A549 (cell line): ENCODE measurements at regions of chr20 and their contacts with region 1.

Region 1: GRCh38 chr20:4091490-4092479 is 76.4 kb upstream of the RNF24 start:
- DNase-seq: peak; percentile 69 to 89
- ATAC-seq: peak; percentile 79 to 87
- H3K4me3 ChIP-seq: no peak overlapping the region
- H3K27ac ChIP-seq: peak overlapping the region; percentile 60 to 67
- H3K4me1 ChIP-seq: peaks cover 12% of the 10 kb centered on the region
- CTCF ChIP-seq: peak; percentile 70
- EP300 ChIP-seq: no peak
- POLR2A ChIP-seq: no peak
- RAD21 ChIP-seq: peak; percentile 65 to 76

Region 2: DNA sequence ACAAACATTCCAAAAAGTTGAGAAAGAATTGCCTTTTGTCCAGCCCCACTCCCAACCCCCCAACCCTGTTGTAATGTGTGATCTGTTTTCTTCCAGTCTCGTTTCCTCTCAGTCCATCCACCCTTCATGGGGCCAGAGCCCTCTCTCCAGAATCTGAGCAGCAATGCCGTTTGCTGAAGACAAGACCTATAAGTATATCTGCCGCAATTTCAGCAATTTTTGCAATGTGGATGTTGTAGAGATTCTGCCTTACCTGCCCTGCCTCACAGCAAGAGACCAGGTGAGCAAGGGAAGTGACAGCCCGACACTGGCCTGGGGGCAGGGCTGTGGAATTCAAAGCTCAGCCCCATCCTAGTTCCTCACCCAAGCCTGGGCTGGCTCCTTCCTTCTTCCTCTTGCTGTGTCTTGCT is 237.3 kb before region 1 on chr20:
- CTCF ChIA-PET with region 1: no interaction called
- POLR2A ChIA-PET with region 1: no interaction called
- DNase-seq: peak in 1 of 2 experiments; percentile 39
- ATAC-seq: peak; percentile 68 to 80; a peak in 5 of 6 replicates
- H3K4me3 ChIP-seq: no peak overlapping the region
- H3K27ac ChIP-seq: peak overlapping the region in 1 of 2 experiments; percentile 14; a peak in 1 of 6 replicates
- H3K4me1 ChIP-seq: 0 out of 3 replicates have a peak, but pooled peaks cover 5% of the 10 kb centered on the region
- CTCF ChIP-seq: no peak
- EP300 ChIP-seq: no peak
- POLR2A ChIP-seq: no peak
- RAD21 ChIP-seq: no peak

Region 3: DNA sequence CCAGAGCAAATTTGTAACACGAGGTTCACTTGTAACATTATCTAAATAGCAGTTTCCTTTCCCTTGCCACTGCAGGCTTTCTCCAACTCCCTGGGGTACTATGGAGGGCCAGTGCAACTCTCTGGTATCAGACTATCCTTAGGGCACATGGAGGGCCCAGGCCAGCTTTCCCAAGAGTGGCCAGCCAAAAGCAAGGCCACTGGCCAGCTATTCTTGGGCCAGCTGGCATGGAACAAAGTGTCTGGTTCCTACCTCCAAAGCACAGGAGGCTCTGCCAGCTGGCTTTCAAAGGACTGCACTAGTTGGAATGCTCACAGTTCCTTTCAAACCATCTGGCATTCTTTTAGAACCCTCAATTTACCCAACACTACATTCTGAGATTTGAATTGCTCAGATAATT is 85.1 kb before region 1 on chr20:
- CTCF ChIA-PET with region 1: interaction called, 167 read pairs
- POLR2A ChIA-PET with region 1: no interaction called
- DNase-seq: no peak
- ATAC-seq: no peak; a peak in 2 of 6 replicates
- H3K4me3 ChIP-seq: no peak overlapping the region
- H3K27ac ChIP-seq: no peak overlapping the region
- H3K4me1 ChIP-seq: peaks cover 3% of the 10 kb centered on the region; the same call in 1 of the 3 replicates
- CTCF ChIP-seq: no peak
- EP300 ChIP-seq: no peak
- POLR2A ChIP-seq: no peak
- RAD21 ChIP-seq: no peak

Region 4: DNA sequence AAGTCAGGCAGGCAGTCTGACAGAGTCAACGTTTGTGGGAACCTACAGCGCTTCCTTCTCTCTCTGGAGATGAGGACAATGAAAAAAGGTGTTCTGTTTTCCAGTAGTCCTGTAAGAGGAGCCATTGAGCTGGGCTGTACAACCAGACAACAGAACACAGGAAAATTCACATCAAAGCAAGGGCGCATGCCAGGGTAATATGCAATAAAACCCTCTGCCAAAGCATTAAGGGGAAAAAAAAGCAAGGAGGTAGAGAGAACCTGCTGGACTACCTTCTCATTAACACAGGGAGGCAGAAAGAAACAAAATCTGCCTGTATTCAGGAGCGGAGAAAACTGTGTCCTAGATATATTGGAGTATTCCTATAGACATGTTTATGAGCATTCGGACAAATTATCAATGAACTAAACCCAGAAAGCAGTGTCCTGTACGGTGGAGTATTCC is 77.7 kb before region 1 on chr20:
- CTCF ChIA-PET with region 1: interaction called, 167 read pairs
- POLR2A ChIA-PET with region 1: no interaction called
- DNase-seq: peak; percentile 73 to 87
- ATAC-seq: peak; percentile 74 to 84
- H3K4me3 ChIP-seq: peak overlapping the region; percentile 95
- H3K27ac ChIP-seq: peak overlapping the region; percentile 34 to 82; a peak in 4 of 6 replicates
- H3K4me1 ChIP-seq: peaks cover 51% of the 10 kb centered on the region
- CTCF ChIP-seq: peak; percentile 91
- EP300 ChIP-seq: no peak
- POLR2A ChIP-seq: no peak
- RAD21 ChIP-seq: peak; percentile 95 to 96

Region 5: GRCh38 chr20:4076671-4077070 is 15.1 kb before region 1 on chr20:
- CTCF ChIA-PET with region 1: interaction called, 146 read pairs
- POLR2A ChIA-PET with region 1: no interaction called
- DNase-seq: no peak
- ATAC-seq: peak; percentile 10 to 16; a peak in 1 of 6 replicates
- H3K4me3 ChIP-seq: no peak overlapping the region
- H3K27ac ChIP-seq: no peak overlapping the region
- H3K4me1 ChIP-seq: peaks cover 5% of the 10 kb centered on the region
- CTCF ChIP-seq: no peak
- EP300 ChIP-seq: no peak
- POLR2A ChIP-seq: no peak
- RAD21 ChIP-seq: no peak

Region 6: GRCh38 chr20:4102381-4102780 is 10.6 kb after region 1 on chr20:
- CTCF ChIA-PET with region 1: interaction called, 39 read pairs
- POLR2A ChIA-PET with region 1: no interaction called
- DNase-seq: no peak
- ATAC-seq: peak; percentile 48 to 65; a peak in 4 of 6 replicates
- H3K4me3 ChIP-seq: no peak overlapping the region
- H3K27ac ChIP-seq: peak overlapping the region; percentile 22 to 65; a peak in 4 of 6 replicates
- H3K4me1 ChIP-seq: peaks cover 16% of the 10 kb centered on the region; the same call in 2 of the 3 replicates
- CTCF ChIP-seq: no peak
- EP300 ChIP-seq: no peak
- POLR2A ChIP-seq: no peak
- RAD21 ChIP-seq: no peak

Region 7: GRCh38 chr20:4119854-4120209 is 28.0 kb after region 1 on chr20:
- CTCF ChIA-PET with region 1: interaction called, 11 read pairs
- POLR2A ChIA-PET with region 1: no interaction called
- DNase-seq: no peak
- ATAC-seq: peak; percentile 74 to 77
- H3K4me3 ChIP-seq: peak overlapping the region; percentile 8; the same call in 1 of the 3 replicates
- H3K27ac ChIP-seq: peak overlapping the region; percentile 86 to 89
- H3K4me1 ChIP-seq: peaks cover 68% of the 10 kb centered on the region
- CTCF ChIP-seq: no peak
- EP300 ChIP-seq: no peak; a peak in 1 of 5 replicates
- POLR2A ChIP-seq: no peak
- RAD21 ChIP-seq: no peak; a peak in 1 of 5 replicates

Region 8: DNA sequence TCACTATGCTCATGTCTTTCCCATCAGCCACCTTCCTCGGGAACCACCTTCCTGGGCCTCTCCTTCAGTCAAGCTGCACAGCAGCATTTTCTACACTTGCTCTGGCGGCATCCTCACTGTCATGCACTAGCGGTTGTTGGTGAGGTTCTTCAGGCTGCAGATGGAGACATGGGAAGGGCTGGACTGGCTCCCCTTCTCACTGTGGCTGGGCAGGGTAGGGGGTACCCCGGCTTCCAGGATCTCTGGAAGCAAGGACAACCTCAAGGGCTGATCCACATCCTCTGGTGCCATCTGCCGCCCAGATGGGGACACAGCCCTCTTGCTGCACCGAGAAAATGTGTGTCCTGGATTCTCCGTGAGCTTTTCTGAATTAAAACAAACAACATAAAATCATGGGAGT is 103.7 kb after region 1 on chr20:
- CTCF ChIA-PET with region 1: interaction called, 11 read pairs
- POLR2A ChIA-PET with region 1: no interaction called
- DNase-seq: peak; percentile 52 to 61
- ATAC-seq: peak; percentile 14 to 24; a peak in 3 of 6 replicates
- H3K4me3 ChIP-seq: no peak overlapping the region
- H3K27ac ChIP-seq: peak overlapping the region; percentile 48 to 88
- H3K4me1 ChIP-seq: peaks cover 55% of the 10 kb centered on the region
- CTCF ChIP-seq: peak; percentile 80
- EP300 ChIP-seq: no peak
- POLR2A ChIP-seq: no peak
- RAD21 ChIP-seq: peak; percentile 89 to 90

Region 9: DNA sequence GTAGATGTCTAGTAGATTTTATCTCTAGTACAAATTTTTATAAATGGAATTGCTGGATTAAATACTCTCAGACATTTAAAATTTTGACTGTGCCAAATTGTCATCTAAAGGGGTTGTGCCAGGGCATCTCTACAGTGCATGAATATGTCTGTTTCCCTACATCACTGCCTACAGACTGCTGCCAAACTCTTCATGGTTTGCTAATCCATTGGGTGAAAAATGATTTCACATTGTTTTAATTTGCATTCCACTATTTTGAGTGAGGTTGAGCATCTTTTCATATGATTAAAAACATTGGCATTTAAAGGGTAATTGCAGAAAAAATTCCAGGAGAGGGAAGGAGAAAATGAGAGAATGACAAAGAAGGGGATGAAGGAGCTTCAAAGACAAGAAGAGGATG is 191.2 kb after region 1 on chr20:
- CTCF ChIA-PET with region 1: no interaction called
- POLR2A ChIA-PET with region 1: no interaction called
- DNase-seq: no peak
- ATAC-seq: no peak
- H3K4me3 ChIP-seq: no peak overlapping the region
- H3K27ac ChIP-seq: no peak overlapping the region
- H3K4me1 ChIP-seq: no peaks in the 10 kb centered on the region
- CTCF ChIP-seq: no peak
- EP300 ChIP-seq: no peak
- POLR2A ChIP-seq: no peak
- RAD21 ChIP-seq: no peak

Region 10: DNA sequence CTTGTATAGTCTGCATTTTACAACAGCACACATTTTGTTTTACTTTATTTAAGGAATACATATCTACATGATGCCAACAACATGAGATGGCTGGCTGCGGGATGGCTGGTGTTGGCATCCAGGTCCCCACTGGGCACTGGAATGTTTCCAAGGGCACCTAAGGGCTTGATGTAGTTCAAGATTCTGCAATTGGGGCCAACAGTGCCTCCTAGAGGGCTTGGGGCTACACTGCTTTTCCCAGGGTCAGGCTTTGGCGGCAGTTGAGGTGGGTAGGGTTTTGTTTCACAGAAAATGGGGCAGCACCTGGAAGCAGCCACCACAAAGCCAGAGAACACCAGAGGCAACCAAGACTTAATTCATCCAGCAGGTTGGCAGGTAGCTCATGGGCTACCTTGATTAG is 427.7 kb after region 1 on chr20:
- CTCF ChIA-PET with region 1: no interaction called
- POLR2A ChIA-PET with region 1: no interaction called
- DNase-seq: peak in 1 of 2 experiments; percentile 50
- ATAC-seq: peak in 1 of 2 experiments; percentile 67; a peak in 2 of 6 replicates
- H3K4me3 ChIP-seq: no peak overlapping the region
- H3K27ac ChIP-seq: 0 out of 6 replicates have a peak overlapping the region, but pooled peaks of 1 of the 2 experiments have one; percentile 1
- H3K4me1 ChIP-seq: peaks cover 2% of the 10 kb centered on the region; the same call in 2 of the 3 replicates
- CTCF ChIP-seq: peak; percentile 24; the same call in 1 of the 3 replicates
- EP300 ChIP-seq: no peak
- POLR2A ChIP-seq: no peak
- RAD21 ChIP-seq: peak; percentile 23 to 57; a peak in 3 of 5 replicates